Activated T-helper 1 cell treated with anti-CD3 and anti-CD28 coated beads, Interleukin-12 subunit alpha, Interleukin-12 subunit beta, Interleukin-2, Interleukin-4 antibody, amounts not matched to agents 30 ng/mL and 10 ng/mL and 1 ng/mL, durations not matched to agents 14 hours and 24 hours and 36 hours (primary cell): ENCODE measurements at regions of chr2 and their contacts with region 1.

Region 1: GRCh38 chr2:23384551-23385349 is at the start of gene KLHL29:
- DNase-seq: peak; percentile 66
- H3K4me3 Mint-ChIP-seq: peak within 1 kb of the TSS; percentile 90
- H3K27ac Mint-ChIP-seq: peak within 1 kb of the TSS; percentile 66
- H3K4me1 Mint-ChIP-seq: peaks cover 18% of the 10 kb centered on the region
- H3K27me3 Mint-ChIP-seq: peaks cover 65% of the 10 kb centered on the region
- total RNA-seq, gene KLHL29: 2.8 and 3.3 TPM in 2 replicates

Region 2: DNA sequence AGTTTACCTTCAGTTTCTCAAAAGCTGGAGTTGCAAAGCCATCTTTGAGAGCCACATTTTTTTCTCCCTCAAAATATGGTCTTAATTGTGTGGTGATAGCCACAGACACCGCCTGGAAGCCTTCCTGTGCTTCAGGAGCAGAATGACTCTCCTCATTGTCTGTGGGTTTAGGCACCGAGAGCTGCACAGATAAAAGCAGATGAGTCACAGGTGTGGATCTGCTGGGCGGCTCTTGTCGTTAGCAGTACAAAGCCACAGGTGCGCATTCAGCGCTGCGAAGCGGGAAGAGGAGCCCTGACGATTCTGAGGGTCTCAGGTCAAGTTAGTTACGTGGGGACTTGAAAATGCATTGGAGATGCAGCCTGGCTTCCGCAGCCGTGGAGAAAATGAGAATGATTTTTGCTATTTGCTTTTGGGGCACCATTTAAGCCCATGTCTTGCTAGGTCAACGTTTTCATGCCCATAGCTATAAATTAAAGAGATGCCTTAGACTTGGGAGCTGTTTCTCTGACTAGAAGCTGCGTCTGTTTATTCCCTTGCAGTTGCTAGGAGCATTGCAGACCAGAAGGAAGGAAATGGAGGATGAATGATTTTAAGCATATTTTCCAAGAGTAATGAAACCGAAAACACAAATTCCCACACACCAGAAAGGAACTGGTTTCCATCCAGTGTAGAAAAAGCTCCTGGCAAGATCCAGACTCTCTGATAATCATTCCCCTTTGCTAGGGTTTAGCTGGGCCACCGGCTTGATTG is 51.8 kb after region 1 on chr2:
- intact Hi-C with region 1: loop called (anchors 2 kb)
- DNase-seq: peak; percentile 25
- H3K4me3 Mint-ChIP-seq: no peak overlapping the region
- H3K27ac Mint-ChIP-seq: no peak overlapping the region
- H3K4me1 Mint-ChIP-seq: peaks cover 20% of the 10 kb centered on the region
- H3K27me3 Mint-ChIP-seq: peaks cover 23% of the 10 kb centered on the region

Region 3: GRCh38 chr2:23452853-23453420 is 68.2 kb after region 1 on chr2:
- intact Hi-C with region 1: loop called (anchors 5 kb)
- DNase-seq: no peak
- H3K4me3 Mint-ChIP-seq: peak overlapping the region; percentile 35
- H3K27ac Mint-ChIP-seq: peak overlapping the region; percentile 11
- H3K4me1 Mint-ChIP-seq: peaks cover 33% of the 10 kb centered on the region
- H3K27me3 Mint-ChIP-seq: peaks cover 12% of the 10 kb centered on the region

Region 4: GRCh38 chr2:23532391-23533337 is 147.9 kb after region 1 on chr2:
- intact Hi-C with region 1: loop called (anchors 5 kb)
- DNase-seq: peak; percentile 21
- H3K4me3 Mint-ChIP-seq: peak overlapping the region; percentile 74
- H3K27ac Mint-ChIP-seq: peak overlapping the region; percentile 89
- H3K4me1 Mint-ChIP-seq: peaks cover 32% of the 10 kb centered on the region
- H3K27me3 Mint-ChIP-seq: peaks cover 6% of the 10 kb centered on the region